ENCODE measurements at regions of chr4 and their contacts with region 1.

Region 1: DNA sequence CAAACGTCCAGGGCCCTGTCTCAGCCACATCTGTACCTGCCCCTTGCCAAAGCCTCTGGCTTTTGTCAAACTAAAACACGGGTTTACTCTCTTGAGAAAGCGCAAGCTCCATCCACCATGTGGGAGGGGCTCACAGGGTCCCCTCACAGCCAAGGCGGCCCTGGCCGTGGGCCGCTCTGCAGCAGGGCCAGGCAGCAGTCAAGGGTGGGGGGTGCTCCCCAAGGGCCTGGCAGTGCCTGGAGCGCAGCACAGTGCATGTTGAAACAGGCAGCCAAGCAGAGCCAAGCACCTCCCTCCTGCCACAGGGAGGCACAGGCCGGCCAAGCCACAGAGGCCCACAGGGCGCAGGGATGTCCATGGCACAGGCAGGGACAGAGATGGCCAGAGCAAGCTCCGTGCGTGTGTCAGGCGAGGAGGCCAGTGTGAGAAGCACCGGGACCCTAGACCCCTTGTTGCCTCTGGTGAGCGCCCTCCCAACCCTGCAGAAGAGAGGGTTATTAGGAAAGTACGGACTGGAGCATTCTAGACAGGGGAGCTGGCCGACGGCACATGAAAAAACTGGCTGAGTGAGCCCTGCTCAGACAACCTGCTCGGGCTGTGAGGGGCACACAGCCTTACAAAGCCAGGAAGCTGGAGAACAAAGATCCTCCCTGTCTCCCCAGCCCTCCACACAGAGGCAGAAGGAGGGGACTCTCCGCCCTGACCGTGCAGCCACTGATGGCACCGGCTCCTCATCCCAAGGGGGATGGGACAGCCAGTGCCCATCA is 39.0 kb downstream of the FAM53A start:
- DNase-seq: peak; percentile 62 to 91 (median 82)
- H3K4me3 ChIP-seq: peak overlapping the region in 33 of 59 donors; percentile 1 to 39 (median 19)
- H3K27ac ChIP-seq: peak overlapping the region; percentile 7 to 99 (median 96)
- H3K27me3 ChIP-seq: no peaks in the 10 kb centered on the region
- CTCF ChIP-seq: peak in 14 of 56 donors; percentile 5 to 46 (median 27)

Region 2: DNA sequence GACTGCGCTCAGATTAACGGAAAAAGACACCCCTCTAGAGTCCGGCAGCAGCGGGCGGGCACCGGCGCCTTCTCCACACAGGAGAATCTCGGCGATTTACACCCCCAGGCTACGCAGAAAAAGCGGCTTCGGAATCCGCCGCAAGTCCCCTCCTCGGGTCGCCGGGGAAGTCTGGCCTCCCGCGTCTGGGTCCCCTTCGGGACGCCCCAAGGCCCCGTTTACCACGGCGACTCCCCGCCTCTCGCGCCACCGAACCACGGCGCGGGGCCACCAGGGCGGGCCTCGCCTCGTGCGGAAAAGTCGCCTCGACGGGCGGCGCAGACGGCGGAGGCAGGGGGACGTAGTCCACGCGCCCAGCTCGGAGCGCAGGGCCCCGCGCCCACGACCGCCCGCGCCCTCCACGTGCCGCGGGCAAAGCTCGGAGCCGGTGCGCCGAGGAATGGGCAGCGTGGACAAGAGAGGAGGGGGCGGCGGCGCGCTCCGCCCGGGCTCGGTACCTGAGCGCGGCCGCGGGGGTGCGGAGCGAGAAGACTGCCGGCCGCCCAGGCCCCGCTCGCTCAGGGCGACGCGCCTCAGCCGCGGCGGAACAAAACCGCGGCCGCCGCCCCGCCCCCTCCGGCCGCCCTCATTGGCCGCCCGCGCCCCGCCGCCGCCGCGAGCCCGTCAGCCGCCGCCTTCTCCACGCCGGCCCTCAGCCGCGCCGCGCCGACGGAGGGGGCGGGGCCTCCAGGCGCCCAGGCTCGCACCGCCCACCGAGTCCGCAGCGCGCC is 38.8 kb after region 1 on chr4 and contains the start of gene FAM53A:
- intact Hi-C with region 1: loop called in 1 of 2 experiments (anchors 5 kb)
- DNase-seq: peak in 4 of 10 donors; percentile 53 to 92 (median 86)
- H3K4me3 ChIP-seq: peak within 1 kb of the TSS; percentile 42 to 80 (median 69)
- H3K27ac ChIP-seq: peak within 1 kb of the TSS in 56 of 59 donors; percentile 23 to 89 (median 78)
- H3K27me3 ChIP-seq: no peaks in the 10 kb centered on the region
- CTCF ChIP-seq: peak in 3 of 56 donors; percentile 3 to 19 (median 7)
- total RNA-seq, gene FAM53A: 0.75 to 11.6 (median 4.3) TPM

Region 3: GRCh38 chr4:1712216-1713002 is 67.3 kb after region 1 on chr4 and contains the start of gene SLBP:
- intact Hi-C with region 1: loop called in 1 of 2 experiments (anchors 5 kb)
- DNase-seq: peak; percentile 81 to 92 (median 87)
- H3K4me3 ChIP-seq: peak within 1 kb of the TSS; percentile 68 to 95 (median 87)
- H3K27ac ChIP-seq: peak within 1 kb of the TSS; percentile 91 to 100 (median 98)
- H3K27me3 ChIP-seq: no peaks in the 10 kb centered on the region
- CTCF ChIP-seq: peak in 14 of 56 donors; percentile 5 to 40 (median 24)
- total RNA-seq, gene SLBP: 23.0 to 54.6 (median 39.9) TPM

Region 4: DNA sequence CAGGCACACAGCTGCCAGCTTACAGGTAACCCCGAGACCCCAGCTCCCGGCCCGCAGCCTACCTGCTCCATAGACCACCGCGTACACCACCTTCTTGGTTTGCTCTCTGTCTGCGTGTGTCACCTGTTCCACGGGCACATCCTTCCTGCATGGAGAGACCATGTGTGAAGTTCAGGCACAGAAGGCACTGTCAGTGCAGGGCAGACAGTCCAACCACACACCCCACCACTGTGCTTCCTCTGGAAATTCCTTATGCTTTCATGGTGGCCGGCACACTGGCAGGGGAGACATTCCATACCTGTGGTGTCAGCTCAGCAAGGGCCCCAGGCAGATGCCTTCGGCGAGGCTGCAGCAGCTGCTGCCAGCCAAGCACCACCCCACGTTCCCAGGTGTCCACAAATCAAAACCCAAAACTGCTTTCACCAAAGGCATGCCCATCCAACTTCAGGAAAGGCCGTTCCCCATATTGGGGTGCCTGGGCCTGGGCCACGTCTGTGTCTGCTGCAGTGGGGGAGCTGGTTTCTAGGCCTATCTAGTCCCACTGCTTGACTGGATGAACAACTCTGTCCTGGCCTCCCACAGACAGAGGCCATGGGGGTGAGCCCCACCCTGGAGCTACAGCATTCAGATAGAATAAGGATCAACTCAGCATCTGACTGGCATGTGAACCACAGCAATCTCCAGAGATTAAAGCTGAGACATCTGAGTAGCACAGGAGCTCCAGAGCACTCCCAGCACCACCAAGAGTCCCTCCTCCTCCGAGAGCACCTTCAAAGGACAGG is 450.9 kb after region 1 on chr4:
- intact Hi-C with region 1: no loop called
- DNase-seq: no peak
- H3K4me3 ChIP-seq: no peak overlapping the region
- H3K27ac ChIP-seq: no peak overlapping the region
- H3K27me3 ChIP-seq: no peaks in the 10 kb centered on the region
- CTCF ChIP-seq: no peak